ENCODE measurements at regions of chr2 and their contacts with region 1.

Region 1: DNA sequence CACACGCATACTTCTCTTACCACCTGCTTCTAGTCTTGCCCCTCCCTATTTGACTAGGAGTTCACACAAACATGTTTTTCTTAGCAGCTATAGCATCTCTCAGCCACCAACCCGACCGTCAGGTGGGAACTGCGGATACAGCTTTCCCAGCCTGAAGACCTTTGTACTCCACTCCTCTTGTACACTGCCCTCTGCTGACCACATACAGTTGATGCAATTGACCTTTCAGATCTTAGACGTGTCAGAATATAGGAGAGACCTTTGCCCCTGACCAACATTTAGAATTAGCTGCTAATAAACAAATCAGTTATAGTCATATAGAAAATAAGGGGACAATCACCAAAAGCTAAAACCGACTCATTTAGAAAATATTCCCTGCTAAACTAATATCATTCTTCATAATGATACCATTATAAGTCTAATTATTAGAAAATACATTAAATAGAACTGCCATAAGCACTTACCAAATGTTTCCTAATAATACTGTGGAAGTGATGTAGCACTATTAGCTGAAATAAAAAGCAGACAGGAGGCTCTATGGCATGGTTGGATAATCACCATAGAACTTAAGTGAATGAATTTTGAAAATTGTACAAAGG is 208.4 kb downstream of the RAD51AP2 start:
- DNase-seq: peak; percentile 28
- CTCF ChIP-seq: peak; percentile 69

Region 2: DNA sequence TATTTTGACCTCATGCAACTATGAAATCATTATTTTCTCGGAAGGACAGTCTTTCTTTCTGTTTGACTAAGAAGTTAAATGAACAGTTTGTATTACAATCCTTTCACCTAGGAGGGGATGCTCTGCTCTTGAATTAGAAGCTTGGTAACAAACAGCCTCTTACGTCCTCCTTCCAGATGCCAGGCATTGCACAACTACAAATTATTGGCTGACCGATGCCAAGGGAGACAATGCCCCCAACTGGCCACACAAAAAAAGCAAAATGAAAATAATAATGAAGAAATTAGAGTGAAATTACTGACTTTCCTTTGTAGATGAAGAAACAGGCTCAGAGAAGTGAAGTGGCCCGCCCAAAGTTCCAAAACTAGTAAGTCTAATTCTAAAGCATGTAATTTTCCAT is 822.2 kb before region 1 on chr2:
- in situ Hi-C with region 1: no loop called
- DNase-seq: no peak
- CTCF ChIP-seq: no peak

Region 3: DNA sequence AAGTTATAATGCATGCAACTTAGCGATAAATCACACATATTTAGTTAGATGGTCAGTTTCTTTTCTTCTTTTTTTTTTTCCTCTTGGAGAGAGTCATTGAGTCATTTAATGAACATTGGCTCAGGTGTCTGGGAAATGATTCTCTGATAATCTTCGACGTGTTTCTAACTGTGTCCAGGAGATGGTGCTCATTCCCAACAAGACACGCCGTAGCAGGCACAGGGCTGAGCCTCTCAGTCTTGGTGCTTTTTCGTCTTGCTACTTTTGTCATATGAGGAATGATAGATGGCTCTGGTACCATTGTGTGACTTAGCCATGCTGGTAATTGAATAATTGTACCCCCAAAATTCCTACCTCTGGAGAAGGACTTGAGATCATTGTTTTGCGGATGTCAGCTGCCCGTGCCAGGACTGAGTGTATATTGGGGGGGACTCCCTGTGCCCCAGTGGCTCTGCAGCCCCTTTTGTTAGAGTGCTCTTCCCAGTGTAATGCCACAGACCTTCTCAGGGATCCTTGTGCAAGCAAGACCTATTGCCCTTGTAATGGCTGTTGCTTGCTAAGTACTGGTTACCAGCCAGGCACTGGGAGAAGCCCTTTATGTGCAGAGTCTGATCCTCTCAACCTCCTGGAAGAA is 536.6 kb before region 1 on chr2:
- in situ Hi-C with region 1: loop called (anchors 10 kb)
- DNase-seq: peak; percentile 41
- CTCF ChIP-seq: peak; percentile 34

Measured in GM13976 (cell line).